ENCODE measurements at regions of chr4 and their contacts with region 1.

Region 1: DNA sequence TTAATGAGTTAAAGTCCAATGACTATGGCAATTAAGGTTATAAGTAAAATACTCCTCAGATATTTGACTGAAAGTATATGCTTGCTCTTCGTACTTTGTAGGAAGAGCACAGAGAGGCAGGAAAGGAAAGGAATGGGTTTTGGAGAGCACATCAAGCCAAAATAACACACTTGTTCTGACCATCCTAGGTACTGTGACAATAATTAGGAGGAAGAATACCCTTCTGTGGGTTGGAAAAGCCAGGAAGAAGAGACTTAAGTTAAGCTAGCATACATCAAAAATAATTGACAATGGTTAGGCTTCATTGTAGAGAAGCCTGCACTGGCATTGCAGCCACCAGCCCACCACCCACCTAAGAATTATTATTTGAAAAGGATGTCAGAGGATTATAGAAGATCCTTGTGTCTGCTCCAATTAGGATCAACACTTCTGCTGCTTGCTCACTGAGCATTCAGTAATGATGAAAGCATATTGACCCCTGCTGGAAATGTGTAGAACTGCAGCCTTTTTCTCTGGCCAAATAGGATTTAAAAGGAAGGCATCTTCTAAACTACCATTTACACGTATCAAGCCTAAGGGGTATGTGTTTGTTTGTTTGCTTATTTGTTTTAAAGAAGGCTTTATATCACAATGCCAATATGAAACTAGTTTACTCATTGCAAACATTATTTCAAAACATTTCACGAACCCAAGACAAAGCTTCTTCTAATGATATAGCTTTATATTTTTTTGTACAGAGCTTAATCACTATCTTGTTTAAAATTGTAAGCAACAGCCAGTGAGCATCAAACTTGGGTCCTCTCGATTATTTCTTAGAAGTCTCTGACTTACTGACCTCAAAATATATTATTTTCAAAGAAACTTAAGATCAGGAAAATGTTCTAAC is 286.2 kb upstream of the TET2 start:
- DNase-seq: peak in 1 of 3 donors; percentile 85
- ATAC-seq: peak; percentile 79
- H3K4me3 ChIP-seq: no peak overlapping the region
- H3K4me1 ChIP-seq: no peaks in the 10 kb centered on the region
- CTCF ChIP-seq: peak; percentile 78

Region 2: DNA sequence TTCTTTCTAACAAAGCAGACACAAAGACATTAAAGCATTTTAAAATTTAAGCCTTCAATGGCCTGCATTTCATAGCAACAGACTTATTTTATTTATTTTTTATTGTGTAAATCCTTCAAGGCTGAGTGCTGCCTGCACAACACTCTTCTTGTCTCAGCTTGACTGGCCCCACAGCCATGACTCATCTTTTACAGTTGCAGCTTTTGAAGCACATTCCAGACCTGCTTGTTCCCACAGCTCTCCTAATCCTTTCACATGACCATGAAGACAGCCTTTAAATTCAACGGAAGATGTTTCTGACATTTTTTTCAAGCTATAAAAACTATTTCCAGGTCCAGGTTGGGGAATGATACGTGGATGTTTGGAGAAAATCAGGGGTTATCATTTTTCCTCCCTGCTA is 863.8 kb before region 1 on chr4:
- intact Hi-C with region 1: loop called in 1 of 2 experiments (anchors 10 kb)
- DNase-seq: no peak
- ATAC-seq: no peak
- H3K4me3 ChIP-seq: no peak overlapping the region
- H3K4me1 ChIP-seq: no peaks in the 10 kb centered on the region
- CTCF ChIP-seq: no peak

Region 3: DNA sequence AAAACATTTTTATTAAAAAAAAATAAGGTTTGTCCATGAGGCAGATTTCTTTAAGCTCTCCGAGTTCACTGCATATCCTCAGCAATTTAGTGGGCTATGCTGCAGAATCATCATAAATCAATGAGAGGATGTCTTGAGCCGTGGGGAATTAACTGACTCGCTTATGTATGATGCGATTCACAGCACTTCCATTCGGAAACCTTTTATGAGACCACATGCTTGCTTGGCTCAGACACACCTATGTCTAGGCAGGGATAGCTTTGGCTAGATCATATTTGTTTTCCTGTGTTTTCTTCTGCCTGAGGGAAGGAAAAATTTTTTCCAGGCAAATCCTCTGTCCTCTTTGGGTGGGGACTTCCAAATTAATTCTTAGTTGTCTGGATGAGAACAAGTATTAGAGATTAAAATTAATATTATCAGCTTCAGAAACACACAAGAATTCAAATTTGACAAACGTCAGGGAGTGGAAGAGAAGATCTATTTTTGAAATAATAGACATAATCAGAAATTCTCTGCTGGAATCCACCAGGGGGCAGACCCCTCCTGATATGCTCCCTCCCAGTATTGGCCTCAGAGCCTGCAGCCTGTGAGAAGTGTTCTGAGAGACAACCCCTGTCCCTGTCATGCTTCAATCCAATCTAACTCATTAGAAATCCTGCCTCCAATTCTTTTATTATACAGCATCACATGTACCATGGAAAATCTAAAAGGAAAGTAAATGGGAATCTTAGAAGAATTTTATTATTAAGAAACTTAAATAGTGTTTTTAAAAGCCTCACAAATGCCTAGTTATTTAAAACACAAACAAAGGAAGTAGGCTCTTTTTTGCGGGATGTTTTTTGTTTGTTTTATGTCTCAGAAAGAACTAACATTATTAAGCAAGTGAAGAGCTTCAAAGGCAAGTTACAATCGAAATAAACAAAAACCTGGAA is 795.6 kb before region 1 on chr4:
- intact Hi-C with region 1: loop called in 1 of 2 experiments (anchors 10 kb)
- DNase-seq: peak in 2 of 3 donors; percentile 23 to 55
- ATAC-seq: peak; percentile 55
- H3K4me3 ChIP-seq: no peak overlapping the region
- H3K4me1 ChIP-seq: no peaks in the 10 kb centered on the region
- CTCF ChIP-seq: no peak

Region 4: DNA sequence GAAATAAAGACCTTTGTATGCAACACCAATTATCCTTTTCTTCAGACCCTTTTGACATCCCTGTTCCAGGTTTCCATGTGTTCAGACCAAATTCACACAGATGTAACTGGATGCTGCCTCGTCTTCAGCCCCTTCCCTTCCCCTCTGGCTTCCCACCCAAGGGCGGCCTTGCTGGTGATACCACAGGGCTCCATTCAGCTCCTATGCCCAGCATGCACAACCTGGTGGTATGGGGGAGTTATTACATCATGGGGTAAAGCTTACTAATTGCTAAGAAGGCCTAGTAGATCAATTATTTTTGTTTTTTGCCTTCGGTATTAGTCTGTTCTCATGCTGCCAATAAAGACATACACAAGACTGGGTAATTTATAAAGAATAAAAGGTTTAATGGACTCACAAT is 48.8 kb before region 1 on chr4:
- intact Hi-C with region 1: no loop called
- DNase-seq: no peak
- ATAC-seq: no peak
- H3K4me3 ChIP-seq: no peak overlapping the region
- H3K4me1 ChIP-seq: no peaks in the 10 kb centered on the region
- CTCF ChIP-seq: no peak